ENCODE measurements at regions of chr15 and their contacts with region 1.

Region 1: GRCh38 chr15:71386448-71387236 is 271.4 kb downstream of the THSD4 start:
- H3K4me3 ChIP-seq: no peak overlapping the region
- H3K27ac ChIP-seq: peak overlapping the region; percentile 25; the same call in 1 of the 2 replicates
- H3K4me1 ChIP-seq: peaks cover 51% of the 10 kb centered on the region
- CTCF ChIP-seq: peak; percentile 61

Region 2: GRCh38 chr15:71011503-71012155 is 375.0 kb before region 1 on chr15:
- CTCF ChIA-PET with region 1: interaction called, 12 read pairs
- POLR2A ChIA-PET with region 1: no interaction called
- H3K4me3 ChIP-seq: no peak overlapping the region
- H3K27ac ChIP-seq: no peak overlapping the region
- H3K4me1 ChIP-seq: no peaks in the 10 kb centered on the region
- CTCF ChIP-seq: peak; percentile 62; the same call in 1 of the 2 replicates

Region 3: GRCh38 chr15:71400294-71400693 is 13.7 kb after region 1 on chr15:
- CTCF ChIA-PET with region 1: interaction called, 31 read pairs
- POLR2A ChIA-PET with region 1: no interaction called
- H3K4me3 ChIP-seq: no peak overlapping the region
- H3K27ac ChIP-seq: no peak overlapping the region
- H3K4me1 ChIP-seq: no peaks in the 10 kb centered on the region; the same call in 1 of the 2 replicates
- CTCF ChIP-seq: no peak

Region 4: DNA sequence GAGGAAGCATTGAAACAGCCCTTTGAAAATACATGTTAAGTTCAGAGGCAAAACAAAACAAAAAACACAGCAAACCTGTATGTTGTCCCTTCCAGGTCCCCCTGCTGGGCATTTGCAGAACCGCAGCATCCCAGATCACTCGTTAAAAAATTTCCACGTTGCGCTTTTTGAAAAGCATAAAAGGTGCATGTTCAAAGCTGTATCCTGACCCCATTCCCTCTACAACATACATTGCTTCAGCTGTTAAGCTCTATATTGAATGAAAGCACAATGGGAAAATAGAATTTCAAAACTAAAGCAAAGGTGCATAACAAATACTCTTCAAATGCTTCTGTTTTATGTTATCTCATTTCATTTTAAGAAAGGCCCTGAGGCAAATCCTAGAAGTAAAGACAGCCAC is 56.9 kb after region 1 on chr15:
- CTCF ChIA-PET with region 1: interaction called, 37 read pairs
- POLR2A ChIA-PET with region 1: interaction called, 4 read pairs
- H3K4me3 ChIP-seq: no peak overlapping the region
- H3K27ac ChIP-seq: no peak overlapping the region
- H3K4me1 ChIP-seq: peaks cover 13% of the 10 kb centered on the region
- CTCF ChIP-seq: no peak

Region 5: GRCh38 chr15:71448688-71449114 is 62.1 kb after region 1 on chr15:
- CTCF ChIA-PET with region 1: interaction called, 37 read pairs
- POLR2A ChIA-PET with region 1: no interaction called
- H3K4me3 ChIP-seq: no peak overlapping the region
- H3K27ac ChIP-seq: no peak overlapping the region
- H3K4me1 ChIP-seq: peaks cover 13% of the 10 kb centered on the region
- CTCF ChIP-seq: peak; percentile 78

Region 6: GRCh38 chr15:71713191-71713811 is 326.7 kb after region 1 on chr15:
- CTCF ChIA-PET with region 1: no interaction called
- POLR2A ChIA-PET with region 1: no interaction called
- H3K4me3 ChIP-seq: no peak overlapping the region
- H3K27ac ChIP-seq: no peak overlapping the region
- H3K4me1 ChIP-seq: peaks cover 12% of the 10 kb centered on the region
- CTCF ChIP-seq: no peak

Measured in HEK293 (cell line).